CD14-positive monocyte (primary cell): ENCODE measurements at regions of chr1 and their contacts with region 1.

Region 1: DNA sequence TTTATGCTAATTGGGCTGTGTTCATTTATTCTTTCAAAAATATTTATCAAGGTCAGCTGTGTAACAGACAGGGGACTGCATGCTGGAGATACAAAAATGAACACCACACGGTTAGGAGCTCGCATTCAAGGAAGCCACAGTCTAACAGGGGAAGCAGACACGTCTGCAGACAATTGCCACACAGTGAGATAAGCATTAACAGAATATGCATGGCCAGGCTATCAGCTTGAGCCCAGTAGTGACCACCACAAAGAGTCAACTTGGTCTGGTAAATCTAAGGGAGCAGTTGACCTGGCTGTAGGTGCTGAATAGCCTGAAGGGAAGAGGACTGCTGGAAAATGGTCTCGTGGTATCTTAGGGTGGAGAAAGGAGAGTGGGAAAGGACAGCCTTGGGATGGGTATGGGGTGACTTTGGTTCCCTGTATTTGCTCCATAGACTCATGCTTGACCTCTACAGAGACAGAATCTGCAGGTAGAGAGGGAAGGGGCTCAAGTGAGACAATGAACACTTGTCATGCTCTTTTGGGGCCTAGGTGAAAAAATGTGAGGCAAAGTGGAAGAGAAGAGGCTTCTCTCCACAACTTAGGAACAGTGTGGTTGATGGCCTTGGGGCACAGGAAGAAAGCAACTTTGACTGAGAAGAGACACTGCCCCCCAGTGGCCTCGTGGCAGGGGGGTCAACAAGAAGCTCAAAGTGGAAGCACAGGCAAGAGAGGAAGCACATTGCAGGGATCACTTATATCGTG is 7.6 kb upstream of the NPL start:
- DNase-seq: peak; percentile 44 to 63 (median 54)
- H3K4me3 ChIP-seq: no peak overlapping the region
- H3K4me3 Mint-ChIP-seq: no peak overlapping the region
- H3K27ac ChIP-seq: no peak overlapping the region
- H3K27ac Mint-ChIP-seq: peak overlapping the region in 1 of 7 donors; percentile 19
- H3K4me1 ChIP-seq: no peaks in the 10 kb centered on the region
- H3K4me1 Mint-ChIP-seq: peaks cover 17% of the 10 kb centered on the region
- H3K27me3 ChIP-seq: no peaks in the 10 kb centered on the region
- H3K27me3 Mint-ChIP-seq: peaks cover 1 to 8% (median 2%) of the 10 kb centered on the region in 3 donors
- CTCF ChIP-seq: peak; percentile 52

Region 2: DNA sequence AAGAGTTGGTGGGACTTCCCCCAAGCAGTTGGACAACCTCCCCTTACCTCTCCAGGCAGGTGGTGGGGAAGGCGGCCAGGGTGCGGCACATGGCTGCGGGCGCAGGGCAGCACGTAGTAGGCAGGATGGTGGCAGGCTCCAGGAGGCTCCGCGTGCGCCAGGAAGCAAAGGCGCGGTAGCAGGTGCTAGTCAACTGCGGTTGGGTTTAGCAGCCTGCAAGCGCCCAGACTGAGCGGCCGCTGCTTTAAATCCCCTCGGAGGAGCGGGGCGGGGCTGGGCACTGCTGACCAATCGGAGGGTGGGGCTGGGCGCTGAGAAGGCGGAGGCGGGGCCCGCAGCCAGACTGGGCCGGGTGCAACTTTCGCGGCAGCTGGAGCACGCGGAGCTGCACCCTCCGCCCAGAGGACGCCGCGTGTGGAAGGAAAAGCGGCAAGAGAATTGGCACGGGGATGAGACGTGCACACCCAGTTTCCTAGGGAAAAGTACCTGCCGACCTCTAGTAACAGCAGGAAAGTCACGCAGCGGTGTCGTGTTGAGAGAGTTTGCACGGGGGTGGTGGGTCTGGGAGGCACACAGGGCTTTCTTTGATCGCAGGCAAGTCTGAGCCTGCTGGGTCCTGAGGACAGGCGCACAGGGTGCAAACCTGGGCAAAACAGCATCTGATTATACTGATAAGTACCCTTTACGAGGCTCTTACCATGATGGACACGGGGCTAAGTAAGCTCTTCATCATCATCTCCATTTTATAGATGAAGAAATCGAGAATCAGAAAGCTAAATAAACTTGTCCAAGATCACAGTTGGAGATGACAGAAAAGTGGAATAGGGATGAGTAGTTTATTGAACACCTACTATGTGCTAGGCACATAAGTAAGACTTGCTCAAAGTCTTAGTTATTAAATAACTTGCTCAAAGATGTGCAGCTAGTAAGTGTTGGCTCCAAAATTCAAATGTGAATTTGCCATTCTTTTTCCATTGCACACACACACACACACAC is 177.5 kb before region 1 on chr1 and contains the start of gene RGS16:
- intact Hi-C with region 1: loop called (anchors 5 kb)
- DNase-seq: peak; percentile 72 to 79 (median 77)
- H3K4me3 ChIP-seq: peak within 1 kb of the TSS in 2 of 3 experiments; percentile 5 to 68
- H3K4me3 Mint-ChIP-seq: peak within 1 kb of the TSS; percentile 9 to 77
- H3K27ac ChIP-seq: no peak within 1 kb of the TSS
- H3K27ac Mint-ChIP-seq: peak within 1 kb of the TSS in 3 of 7 donors; percentile 16 to 52 (median 33)
- H3K4me1 ChIP-seq: peaks cover 11 to 13% of the 10 kb centered on the region in 2 donors
- H3K4me1 Mint-ChIP-seq: peaks cover 20% of the 10 kb centered on the region
- H3K27me3 ChIP-seq: peaks cover 13 to 46% of the 10 kb centered on the region in 2 donors
- H3K27me3 Mint-ChIP-seq: peaks cover 9 to 23% (median 19%) of the 10 kb centered on the region in 3 donors
- CTCF ChIP-seq: no peak
- polyA plus RNA-seq, gene RGS16: 0.07 to 0.44 TPM in 2 of 3 donors, not detected in the other

Region 3: GRCh38 chr1:182725259-182726255 is 56.5 kb before region 1 on chr1:
- intact Hi-C with region 1: no loop called
- DNase-seq: no peak
- H3K4me3 ChIP-seq: no peak overlapping the region
- H3K4me3 Mint-ChIP-seq: no peak overlapping the region
- H3K27ac ChIP-seq: no peak overlapping the region
- H3K27ac Mint-ChIP-seq: no peak overlapping the region
- H3K4me1 ChIP-seq: no peaks in the 10 kb centered on the region
- H3K4me1 Mint-ChIP-seq: no peaks in the 10 kb centered on the region
- H3K27me3 ChIP-seq: peaks cover 0 to 2% of the 10 kb centered on the region in 2 donors
- H3K27me3 Mint-ChIP-seq: peaks cover 3 to 10% (median 4%) of the 10 kb centered on the region in 3 donors
- CTCF ChIP-seq: no peak

Region 4: GRCh38 chr1:182739545-182739944 is 42.5 kb before region 1 on chr1:
- intact Hi-C with region 1: no loop called
- DNase-seq: no peak
- H3K4me3 ChIP-seq: no peak overlapping the region
- H3K4me3 Mint-ChIP-seq: no peak overlapping the region
- H3K27ac ChIP-seq: no peak overlapping the region
- H3K27ac Mint-ChIP-seq: no peak overlapping the region
- H3K4me1 ChIP-seq: no peaks in the 10 kb centered on the region
- H3K4me1 Mint-ChIP-seq: no peaks in the 10 kb centered on the region
- H3K27me3 ChIP-seq: no peaks in the 10 kb centered on the region
- H3K27me3 Mint-ChIP-seq: peaks cover 2 to 11% (median 6%) of the 10 kb centered on the region in 3 donors
- CTCF ChIP-seq: no peak

Region 5: DNA sequence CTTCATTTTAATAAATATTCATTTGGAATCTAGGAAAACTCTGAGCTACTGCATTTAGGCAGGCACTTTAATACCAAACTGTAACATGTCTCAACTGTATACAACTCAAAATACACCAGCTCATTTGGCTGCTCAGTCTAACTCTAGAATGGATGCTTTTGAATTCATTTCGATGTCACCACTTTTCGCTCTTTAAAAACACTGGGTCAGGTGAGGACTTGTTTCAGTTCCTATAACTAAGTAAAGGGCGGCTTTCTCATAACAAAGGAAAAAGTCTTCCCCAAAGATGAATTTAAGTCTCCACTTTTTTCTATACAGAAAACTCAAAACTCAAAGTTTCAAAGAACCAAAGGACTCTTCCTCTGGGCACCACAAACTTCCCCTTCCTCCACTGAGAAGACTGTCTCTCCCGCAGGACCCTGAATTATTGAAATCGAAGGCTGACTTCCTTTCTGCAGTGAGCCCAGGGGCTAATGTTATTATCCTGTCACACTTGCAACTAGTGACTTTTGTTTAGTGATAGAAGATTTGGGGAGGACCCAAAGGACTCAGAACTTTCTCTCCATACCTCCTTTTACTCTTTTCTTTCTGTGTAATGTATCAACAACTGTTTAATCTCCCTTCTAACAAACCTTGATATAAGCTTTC is 47.4 kb after region 1 on chr1:
- intact Hi-C with region 1: no loop called
- DNase-seq: no peak
- H3K4me3 ChIP-seq: no peak overlapping the region
- H3K4me3 Mint-ChIP-seq: no peak overlapping the region
- H3K27ac ChIP-seq: no peak overlapping the region
- H3K27ac Mint-ChIP-seq: peak overlapping the region in 3 of 7 donors; percentile 31 to 47 (median 33)
- H3K4me1 ChIP-seq: no peaks in the 10 kb centered on the region
- H3K4me1 Mint-ChIP-seq: peaks cover 7% of the 10 kb centered on the region
- H3K27me3 ChIP-seq: no peaks in the 10 kb centered on the region
- H3K27me3 Mint-ChIP-seq: no peaks in the 10 kb centered on the region
- CTCF ChIP-seq: no peak